ENCODE measurements at regions of chr17 and their contacts with region 1.

Region 1: GRCh38 chr17:79093270-79093669 is 18.6 kb downstream of the ENGASE start:
- DNase-seq: no peak

Region 2: GRCh38 chr17:79114458-79115301 is 21.4 kb after region 1 on chr17:
- CTCF ChIA-PET with region 1: interaction called, 13 read pairs
- POLR2A ChIA-PET with region 1: no interaction called
- DNase-seq: peak; percentile 46